ENCODE measurements at regions of chr9 and their contacts with region 1.

Region 1: DNA sequence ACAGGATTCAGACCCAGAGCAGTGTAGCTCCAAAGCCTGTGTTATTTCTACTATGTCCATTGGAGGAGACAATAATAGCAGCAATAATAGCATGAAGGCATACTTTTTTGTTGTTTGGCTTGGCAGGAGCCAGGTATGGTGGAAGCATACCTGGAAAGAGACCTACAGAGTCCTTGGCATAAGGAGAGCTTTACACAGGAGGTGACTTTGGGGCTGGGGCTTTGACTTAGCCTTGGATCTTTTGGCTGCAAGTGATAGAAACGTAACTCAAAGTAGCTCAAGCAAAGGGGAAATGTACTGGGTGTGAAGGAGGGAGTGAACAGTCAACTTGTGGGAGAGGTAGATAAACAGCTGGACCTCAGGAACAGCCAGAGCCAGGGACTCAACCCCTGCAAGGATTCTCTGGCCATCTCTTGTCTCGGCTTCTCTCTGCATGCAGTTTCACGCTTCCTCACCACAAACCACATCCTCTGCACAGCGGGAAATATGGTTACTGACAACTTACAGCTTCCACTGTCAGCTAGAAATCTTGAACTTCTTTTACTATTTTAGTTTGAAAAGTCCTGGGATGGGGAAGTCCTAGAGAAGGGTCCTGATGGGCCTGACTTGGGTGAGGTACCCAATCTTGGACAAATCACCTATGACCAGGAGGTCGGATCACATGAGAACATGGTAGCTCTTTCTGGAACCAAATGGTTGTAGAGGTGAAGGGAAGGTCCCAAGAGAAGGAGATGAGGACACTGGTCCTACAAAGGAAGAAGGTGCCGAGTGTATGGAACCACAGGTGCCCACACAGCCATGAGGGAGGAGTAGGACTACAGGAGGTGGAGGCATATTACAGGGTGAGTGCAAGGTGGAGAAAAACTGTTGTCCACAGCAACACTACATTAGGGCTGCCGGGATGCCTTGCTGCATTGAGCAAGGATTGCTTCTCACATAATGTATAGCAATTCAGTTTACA is 47.0 kb upstream of the TGFBR1 start:
- DNase-seq: peak; percentile 92
- H3K4me3 Mint-ChIP-seq: peak overlapping the region; percentile 72
- H3K27ac Mint-ChIP-seq: peak overlapping the region; percentile 97
- H3K4me1 Mint-ChIP-seq: peaks cover 65% of the 10 kb centered on the region
- H3K27me3 Mint-ChIP-seq: peaks cover 3% of the 10 kb centered on the region

Region 2: DNA sequence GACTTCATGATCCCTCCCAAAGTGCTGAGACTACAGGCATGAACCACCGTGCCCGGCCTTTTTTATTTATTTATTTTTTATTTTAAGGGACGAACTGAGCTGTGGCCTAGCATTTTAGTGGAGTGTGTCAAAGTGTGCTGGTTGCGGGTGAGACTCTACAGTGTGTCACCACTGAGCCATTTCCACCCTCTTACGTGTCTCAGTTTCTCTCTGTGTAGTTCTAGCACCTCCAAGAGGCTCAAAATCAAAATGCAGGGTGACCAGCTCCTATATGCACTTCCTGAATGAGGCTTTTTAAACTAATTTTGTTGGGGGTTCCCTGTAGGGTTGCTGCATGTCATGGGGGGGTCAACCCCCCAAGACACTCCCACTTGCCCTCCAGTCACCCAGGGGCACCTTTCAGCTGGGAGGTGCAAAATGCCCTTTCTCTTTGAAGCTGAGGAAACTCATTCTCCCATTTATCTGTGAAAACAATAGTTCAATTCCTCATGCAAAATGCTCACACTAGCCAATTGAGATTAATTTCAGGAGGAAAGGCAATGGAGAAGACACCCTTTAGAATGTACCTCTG is 44.9 kb before region 1 on chr9:
- CTCF ChIA-PET with region 1: interaction called, 9 read pairs
- POLR2A ChIA-PET with region 1: interaction called, 23 read pairs
- DNase-seq: no peak
- H3K4me3 Mint-ChIP-seq: no peak overlapping the region
- H3K27ac Mint-ChIP-seq: peak overlapping the region; percentile 68
- H3K4me1 Mint-ChIP-seq: peaks cover 16% of the 10 kb centered on the region
- H3K27me3 Mint-ChIP-seq: no peaks in the 10 kb centered on the region

Region 3: DNA sequence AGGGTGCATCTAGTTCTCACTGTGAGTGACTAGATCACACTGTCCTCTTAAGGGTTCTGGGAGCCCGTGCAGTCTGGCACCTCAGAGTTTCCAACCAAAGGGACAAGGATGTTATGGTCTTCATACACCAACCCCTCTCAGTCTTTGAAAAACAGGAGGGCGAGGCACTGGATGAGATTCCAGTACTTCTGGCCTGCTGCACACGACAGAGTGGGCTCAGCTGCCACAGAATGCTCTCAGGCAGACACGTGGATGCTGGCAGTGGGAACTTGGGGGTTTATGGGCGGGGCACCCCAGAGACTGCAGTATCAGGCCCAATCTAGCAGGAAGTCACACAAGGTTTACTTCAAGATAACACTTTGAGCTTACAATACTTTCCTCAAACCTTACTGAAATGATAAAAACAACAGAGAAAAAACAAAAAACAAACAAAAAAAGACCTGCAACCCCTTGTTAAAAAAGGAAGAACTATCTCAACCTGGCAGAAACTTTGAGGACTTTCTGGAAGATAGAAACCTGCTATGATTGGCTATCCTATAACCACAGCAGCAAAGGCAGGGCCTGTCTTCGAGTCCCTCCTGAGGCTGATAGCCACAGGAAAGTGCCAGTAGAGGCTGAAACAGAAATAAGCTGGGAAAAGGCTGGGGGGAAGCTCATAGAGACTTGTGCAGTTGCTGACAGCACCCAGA is 18.7 kb after region 1 on chr9:
- CTCF ChIA-PET with region 1: interaction called, 31 read pairs
- POLR2A ChIA-PET with region 1: interaction called, 46 read pairs
- DNase-seq: peak; percentile 68
- H3K4me3 Mint-ChIP-seq: peak overlapping the region; percentile 5
- H3K27ac Mint-ChIP-seq: peak overlapping the region; percentile 95
- H3K4me1 Mint-ChIP-seq: peaks cover 36% of the 10 kb centered on the region
- H3K27me3 Mint-ChIP-seq: peaks cover 4% of the 10 kb centered on the region

Region 4: DNA sequence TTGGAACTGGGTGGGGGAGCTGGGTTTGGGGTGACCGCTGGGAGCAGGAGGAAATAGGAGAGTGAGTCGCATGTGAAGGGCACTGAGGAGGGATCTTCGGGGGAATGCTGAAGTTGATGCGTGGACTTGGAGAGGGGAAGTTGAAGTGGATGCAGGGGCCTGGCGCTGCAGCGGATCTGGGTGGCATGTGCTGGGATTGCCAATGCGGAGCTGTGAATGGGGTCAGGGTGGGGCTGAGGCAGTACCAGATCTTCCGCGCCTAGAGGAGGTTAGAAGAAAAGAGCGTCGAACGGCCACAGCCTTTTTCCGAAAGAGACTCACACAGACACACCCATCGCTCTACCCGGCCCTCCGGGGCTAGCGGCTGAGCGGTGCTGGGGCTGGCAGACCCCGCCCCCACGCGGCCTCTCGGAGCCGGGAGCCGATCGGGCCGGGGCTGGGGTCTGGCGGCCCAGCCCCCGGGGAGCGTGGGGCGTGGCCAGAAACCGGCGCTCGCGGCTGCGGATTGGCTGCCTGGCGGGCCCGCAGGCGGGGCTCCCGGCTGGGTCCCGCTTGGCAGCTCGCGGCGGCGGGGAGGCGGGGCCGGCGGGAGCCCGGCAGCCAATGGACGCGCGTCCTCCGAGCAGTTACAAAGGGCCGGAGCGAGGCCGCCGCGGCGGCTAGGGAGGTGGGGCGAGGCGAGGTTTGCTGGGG is 46.7 kb after region 1 on chr9 and contains the start of gene TGFBR1:
- CTCF ChIA-PET with region 1: interaction called, 28 read pairs
- POLR2A ChIA-PET with region 1: interaction called, 108 read pairs
- DNase-seq: peak; percentile 96
- H3K4me3 Mint-ChIP-seq: peak within 1 kb of the TSS; percentile 85
- H3K27ac Mint-ChIP-seq: peak within 1 kb of the TSS; percentile 93
- H3K4me1 Mint-ChIP-seq: peaks cover 73% of the 10 kb centered on the region
- H3K27me3 Mint-ChIP-seq: no peaks in the 10 kb centered on the region
- total RNA-seq, gene TGFBR1: 57.4 to 58.5 TPM

Region 5: GRCh38 chr9:99118782-99119466 is 61.0 kb after region 1 on chr9:
- CTCF ChIA-PET with region 1: interaction called, 3 read pairs
- POLR2A ChIA-PET with region 1: interaction called, 19 read pairs
- DNase-seq: peak; percentile 74
- H3K4me3 Mint-ChIP-seq: peak overlapping the region; percentile 62
- H3K27ac Mint-ChIP-seq: peak overlapping the region; percentile 91
- H3K4me1 Mint-ChIP-seq: peaks cover 66% of the 10 kb centered on the region
- H3K27me3 Mint-ChIP-seq: no peaks in the 10 kb centered on the region

Region 6: GRCh38 chr9:99563364-99563763 is 505.4 kb after region 1 on chr9:
- CTCF ChIA-PET with region 1: no interaction called
- POLR2A ChIA-PET with region 1: no interaction called
- DNase-seq: no peak
- H3K4me3 Mint-ChIP-seq: no peak overlapping the region
- H3K27ac Mint-ChIP-seq: no peak overlapping the region
- H3K4me1 Mint-ChIP-seq: no peaks in the 10 kb centered on the region
- H3K27me3 Mint-ChIP-seq: peaks cover 17% of the 10 kb centered on the region

Measured in activated CD4-positive, alpha-beta memory T cell treated with anti-CD3 and anti-CD28 coated beads, Interleukin-2, amount 10 ng/mL, durations not matched to agents 7 days and 5 days (primary cell).